ENCODE measurements at regions of chr2 and their contacts with region 1.

Region 1: DNA sequence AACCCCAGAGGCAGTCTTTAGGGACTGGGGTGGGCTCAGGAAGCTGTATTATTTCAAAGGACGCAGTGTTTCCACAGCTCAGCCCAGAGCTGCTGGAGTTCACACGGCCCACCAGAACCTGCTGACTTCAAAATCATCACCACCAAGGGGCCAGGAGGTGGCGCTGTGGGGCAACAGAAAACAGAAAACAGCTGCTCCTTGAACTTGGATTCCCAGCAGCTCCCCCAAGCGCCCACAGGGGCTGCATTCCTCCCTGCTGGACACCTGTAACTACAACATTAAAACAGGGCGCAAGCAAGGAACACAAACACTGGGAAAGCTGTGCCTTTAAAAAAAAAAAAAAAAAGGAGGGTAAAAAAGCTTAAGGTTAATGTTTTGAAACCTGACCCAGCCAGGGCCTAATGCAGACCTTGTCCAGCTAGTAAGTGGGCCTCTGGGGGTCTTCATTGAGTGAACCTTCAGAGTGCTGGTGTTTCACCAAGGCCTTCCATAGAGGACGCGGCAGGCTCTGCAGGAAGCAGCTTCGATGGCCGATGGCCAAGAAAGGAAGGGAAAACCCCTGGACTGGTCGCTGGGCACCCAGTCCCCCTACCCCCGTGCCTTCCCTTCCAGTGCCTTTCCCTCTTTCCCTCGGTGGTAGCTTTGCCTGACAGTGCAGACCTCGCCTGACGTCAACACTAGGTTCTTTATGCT is 25.9 kb downstream of the MLPH start:
- DNase-seq: peak; percentile 48 to 85 (median 77)
- ATAC-seq: peak; percentile 86
- H3K4me3 ChIP-seq: no peak overlapping the region
- H3K4me3 Mint-ChIP-seq: no peak overlapping the region
- H3K27ac ChIP-seq: no peak overlapping the region
- H3K27ac Mint-ChIP-seq: no peak overlapping the region
- H3K4me1 ChIP-seq: no peaks in the 10 kb centered on the region
- H3K4me1 Mint-ChIP-seq: no peaks in the 10 kb centered on the region
- H3K27me3 ChIP-seq: no peaks in the 10 kb centered on the region
- H3K27me3 Mint-ChIP-seq: peaks cover 3% of the 10 kb centered on the region
- CTCF ChIP-seq: peak; percentile 83

Region 2: DNA sequence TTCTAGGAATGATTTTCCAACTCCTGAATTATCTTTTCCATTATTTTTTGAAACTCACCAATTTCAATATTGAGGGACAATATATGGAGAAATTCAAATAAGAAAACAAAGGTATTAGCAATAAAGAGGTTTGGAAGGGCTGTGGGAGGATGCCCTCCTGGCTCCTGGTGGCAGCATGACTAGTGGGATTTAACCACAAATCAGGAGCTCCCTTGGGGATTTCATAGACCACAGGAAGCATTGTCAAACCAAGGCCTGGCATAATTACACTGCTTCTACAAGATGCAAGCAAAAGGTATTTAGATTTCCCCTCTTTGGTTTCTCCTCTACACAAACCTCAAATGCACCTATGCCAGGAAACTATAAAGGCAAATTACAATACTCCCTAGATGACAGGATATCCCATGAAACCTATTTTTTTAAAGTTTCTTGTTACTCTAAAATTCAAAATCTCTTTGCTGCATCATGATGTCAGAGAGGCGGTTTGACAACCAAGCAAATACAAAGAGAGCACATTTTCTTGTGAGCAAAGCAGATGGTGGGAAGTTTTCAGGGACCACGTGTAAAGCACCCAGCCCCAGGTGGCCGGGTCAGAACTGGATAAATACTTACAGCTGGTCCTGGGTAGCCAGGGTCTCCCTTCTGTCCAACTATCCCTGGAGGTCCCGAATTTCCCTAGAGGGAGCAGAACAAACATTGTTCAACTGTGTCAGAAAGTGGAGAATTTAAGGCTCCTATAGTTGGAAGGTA is 166.9 kb before region 1 on chr2:
- CTCF ChIA-PET with region 1: no interaction called
- POLR2A ChIA-PET with region 1: no interaction called
- intact Hi-C with region 1: no loop called
- DNase-seq: no peak
- ATAC-seq: no peak
- H3K4me3 ChIP-seq: no peak overlapping the region
- H3K4me3 Mint-ChIP-seq: no peak overlapping the region
- H3K27ac ChIP-seq: no peak overlapping the region
- H3K27ac Mint-ChIP-seq: no peak overlapping the region
- H3K4me1 ChIP-seq: no peaks in the 10 kb centered on the region
- H3K4me1 Mint-ChIP-seq: no peaks in the 10 kb centered on the region
- H3K27me3 ChIP-seq: no peaks in the 10 kb centered on the region
- H3K27me3 Mint-ChIP-seq: no peaks in the 10 kb centered on the region
- CTCF ChIP-seq: no peak

Region 3: GRCh38 chr2:237500681-237501424 is 12.1 kb before region 1 on chr2:
- CTCF ChIA-PET with region 1: interaction called, 11 read pairs
- POLR2A ChIA-PET with region 1: no interaction called
- intact Hi-C with region 1: no loop called
- DNase-seq: no peak
- ATAC-seq: no peak
- H3K4me3 ChIP-seq: no peak overlapping the region
- H3K4me3 Mint-ChIP-seq: no peak overlapping the region
- H3K27ac ChIP-seq: no peak overlapping the region
- H3K27ac Mint-ChIP-seq: no peak overlapping the region
- H3K4me1 ChIP-seq: no peaks in the 10 kb centered on the region
- H3K4me1 Mint-ChIP-seq: no peaks in the 10 kb centered on the region
- H3K27me3 ChIP-seq: peaks cover 0 to 2% of the 10 kb centered on the region in 2 experiments
- H3K27me3 Mint-ChIP-seq: peaks cover 17% of the 10 kb centered on the region
- CTCF ChIP-seq: no peak

Region 4: DNA sequence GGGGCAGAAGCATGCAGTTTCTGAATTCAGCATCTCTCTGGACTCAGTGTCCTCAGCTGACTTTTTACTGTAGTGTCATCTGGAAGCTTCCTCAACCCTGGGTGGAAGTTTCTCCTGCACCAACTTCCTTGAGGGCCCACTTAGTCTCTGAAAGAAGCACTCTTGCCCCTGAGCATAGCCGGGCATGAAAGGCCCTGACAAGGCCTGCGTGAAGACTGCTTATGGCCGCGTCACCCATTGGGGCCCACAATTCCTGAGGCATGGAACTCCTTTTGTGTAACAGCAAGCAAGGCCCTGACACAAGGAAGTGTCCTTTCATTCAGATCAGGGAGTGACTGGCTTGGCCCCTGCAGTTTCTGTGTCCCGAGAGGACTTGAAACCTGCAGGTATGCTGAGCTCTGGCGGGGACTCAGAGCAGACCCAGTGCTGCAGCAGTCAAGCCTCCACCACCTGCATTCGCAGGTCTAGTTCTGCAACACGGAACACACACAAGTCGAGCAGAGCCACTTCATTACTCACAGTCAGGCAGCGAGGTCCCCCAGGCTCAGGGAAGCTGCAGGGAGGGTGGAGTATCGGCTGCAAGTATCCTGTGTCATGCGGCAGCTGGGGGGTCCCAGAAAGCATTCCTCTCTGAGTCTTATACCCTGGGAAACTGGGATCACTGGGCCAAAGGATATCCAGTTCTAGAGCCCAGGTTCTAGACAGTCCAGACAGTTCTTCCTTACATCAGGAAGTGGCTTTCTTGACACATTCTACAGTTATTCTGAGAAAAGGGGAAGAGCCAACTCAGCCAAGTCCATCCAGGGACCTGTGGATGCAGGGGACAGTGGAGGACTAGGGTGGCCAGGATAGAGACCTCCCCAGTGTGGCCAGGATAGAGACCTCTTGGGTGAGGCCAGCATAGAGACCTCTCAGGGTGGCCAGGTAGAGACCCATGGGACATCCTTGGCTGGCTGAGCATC is 17.8 kb after region 1 on chr2:
- CTCF ChIA-PET with region 1: interaction called, 17 read pairs
- POLR2A ChIA-PET with region 1: no interaction called
- intact Hi-C with region 1: no loop called
- DNase-seq: no peak
- ATAC-seq: no peak
- H3K4me3 ChIP-seq: no peak overlapping the region
- H3K4me3 Mint-ChIP-seq: no peak overlapping the region
- H3K27ac ChIP-seq: no peak overlapping the region
- H3K27ac Mint-ChIP-seq: no peak overlapping the region
- H3K4me1 ChIP-seq: no peaks in the 10 kb centered on the region
- H3K4me1 Mint-ChIP-seq: no peaks in the 10 kb centered on the region
- H3K27me3 ChIP-seq: no peaks in the 10 kb centered on the region
- H3K27me3 Mint-ChIP-seq: no peaks in the 10 kb centered on the region
- CTCF ChIP-seq: no peak

Region 5: GRCh38 chr2:237774802-237775553 is 262.1 kb after region 1 on chr2:
- CTCF ChIA-PET with region 1: interaction called, 5 read pairs
- POLR2A ChIA-PET with region 1: no interaction called
- intact Hi-C with region 1: loop called in 1 of 2 experiments (anchors 2 kb)
- DNase-seq: peak in 6 of 9 experiments; percentile 14 to 59 (median 46)
- ATAC-seq: peak; percentile 73
- H3K4me3 ChIP-seq: no peak overlapping the region
- H3K4me3 Mint-ChIP-seq: no peak overlapping the region
- H3K27ac ChIP-seq: no peak overlapping the region
- H3K27ac Mint-ChIP-seq: no peak overlapping the region
- H3K4me1 ChIP-seq: no peaks in the 10 kb centered on the region
- H3K4me1 Mint-ChIP-seq: no peaks in the 10 kb centered on the region
- H3K27me3 ChIP-seq: no peaks in the 10 kb centered on the region
- H3K27me3 Mint-ChIP-seq: no peaks in the 10 kb centered on the region
- CTCF ChIP-seq: peak; percentile 43

Measured in CD8-positive, alpha-beta T cell (primary cell).